ENCODE measurements at regions of chr12 and their contacts with region 1.

Region 1: DNA sequence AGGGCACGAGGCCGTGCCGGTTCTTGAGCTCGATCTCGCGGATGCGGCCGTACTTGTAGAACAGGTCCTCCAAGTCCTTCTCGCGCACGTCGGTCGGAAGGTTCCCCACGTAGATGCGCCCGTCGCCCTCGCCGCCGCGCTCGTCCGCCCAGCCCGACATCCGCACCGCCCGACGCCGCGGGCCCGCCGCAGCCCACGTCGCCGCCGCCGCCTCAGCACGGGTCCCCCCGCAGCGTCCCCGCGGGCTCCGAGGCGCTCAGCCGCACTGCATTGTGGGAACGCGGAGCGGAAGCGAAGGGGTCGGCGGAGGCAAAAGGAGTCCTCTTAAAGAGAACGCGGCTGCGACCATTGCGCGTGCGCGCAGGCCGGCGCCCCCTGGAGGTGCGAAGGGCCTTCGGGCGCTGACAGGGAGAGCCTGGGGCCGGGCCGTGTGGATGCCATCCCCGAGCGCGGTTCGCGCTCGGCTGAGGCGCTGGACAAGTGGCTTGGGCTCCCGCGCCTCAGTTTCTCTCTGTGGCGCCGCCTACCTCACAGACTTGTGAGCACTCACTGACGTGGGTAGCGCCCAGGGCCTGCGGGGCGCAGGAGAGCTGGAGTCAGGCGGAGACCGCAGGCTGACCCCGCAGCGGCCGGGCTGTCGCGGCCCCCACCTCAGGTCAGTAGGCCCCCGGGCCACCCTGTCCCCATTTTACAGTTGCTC is at the start of gene SRSF9:
- DNase-seq: peak; percentile 96 to 99 (median 97)
- H3K4me3 ChIP-seq: peak within 1 kb of the TSS; percentile 86
- H3K4me3 Mint-ChIP-seq: peak within 1 kb of the TSS; percentile 81 to 96 (median 92)
- H3K27ac ChIP-seq: peak within 1 kb of the TSS; percentile 75
- H3K27ac Mint-ChIP-seq: peak within 1 kb of the TSS; percentile 79 to 97 (median 94)
- H3K4me1 ChIP-seq: peaks cover 50% of the 10 kb centered on the region
- H3K4me1 Mint-ChIP-seq: peaks cover 47 to 61% (median 60%) of the 10 kb centered on the region in 3 donors
- H3K27me3 ChIP-seq: no peaks in the 10 kb centered on the region
- H3K27me3 Mint-ChIP-seq: peaks cover 0 to 3% of the 10 kb centered on the region in 2 donors
- total RNA-seq, gene SRSF9: 269 to 272 TPM

Region 2: DNA sequence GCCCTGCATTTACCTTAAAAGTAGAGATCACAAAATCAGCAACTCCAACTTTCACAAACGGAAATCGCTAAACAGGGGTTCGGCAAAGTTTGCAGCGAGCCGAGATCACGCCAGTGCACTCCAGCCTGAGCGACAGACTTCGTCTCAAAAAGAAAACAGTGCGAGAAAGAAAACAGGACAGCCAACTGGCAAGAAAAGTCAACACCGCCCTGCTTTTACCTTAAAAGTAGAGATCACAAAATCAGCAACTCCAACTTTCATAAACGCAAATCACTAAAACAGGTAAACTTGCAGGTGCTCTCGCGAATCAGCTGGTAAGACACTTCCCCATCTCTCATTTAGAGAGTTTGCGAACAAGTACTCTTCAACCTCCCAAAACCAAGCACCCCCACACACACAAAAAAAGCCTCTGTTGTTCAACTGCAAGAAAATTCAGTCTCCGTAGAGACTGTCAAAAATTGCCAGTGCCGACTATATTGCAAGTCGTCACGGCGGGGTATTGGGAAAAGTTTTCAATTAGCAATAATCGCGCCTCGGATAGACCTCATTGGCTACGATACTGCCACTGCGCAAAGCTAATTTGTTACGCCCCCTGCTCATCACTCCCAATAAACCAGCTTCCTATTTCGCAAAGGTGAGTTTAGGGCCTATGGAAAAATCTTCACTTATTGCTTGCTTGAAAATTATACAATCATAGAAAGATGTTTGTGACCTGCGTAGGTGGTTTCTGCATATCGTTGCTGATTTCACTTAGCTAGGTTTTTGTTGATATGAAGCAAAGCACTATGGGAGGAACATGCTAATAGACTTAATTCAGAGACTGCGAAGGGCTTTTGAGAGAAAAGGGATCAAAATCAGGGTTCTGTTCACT is 176.7 kb before region 1 on chr12 and contains the start of gene RNU4-1:
- CTCF ChIA-PET with region 1: no interaction called
- POLR2A ChIA-PET with region 1: interaction called, 20 read pairs
- DNase-seq: peak; percentile 52 to 90 (median 85)
- H3K4me3 ChIP-seq: peak within 1 kb of the TSS; percentile 91
- H3K4me3 Mint-ChIP-seq: no peak within 1 kb of the TSS
- H3K27ac ChIP-seq: peak within 1 kb of the TSS; percentile 100
- H3K27ac Mint-ChIP-seq: no peak within 1 kb of the TSS
- H3K4me1 ChIP-seq: peaks cover 16% of the 10 kb centered on the region
- H3K4me1 Mint-ChIP-seq: peaks cover 4 to 7% (median 5%) of the 10 kb centered on the region in 3 donors
- H3K27me3 ChIP-seq: no peaks in the 10 kb centered on the region
- H3K27me3 Mint-ChIP-seq: no peaks in the 10 kb centered on the region
- total RNA-seq, gene RNU4-1: 628 to 678 TPM

Region 3: DNA sequence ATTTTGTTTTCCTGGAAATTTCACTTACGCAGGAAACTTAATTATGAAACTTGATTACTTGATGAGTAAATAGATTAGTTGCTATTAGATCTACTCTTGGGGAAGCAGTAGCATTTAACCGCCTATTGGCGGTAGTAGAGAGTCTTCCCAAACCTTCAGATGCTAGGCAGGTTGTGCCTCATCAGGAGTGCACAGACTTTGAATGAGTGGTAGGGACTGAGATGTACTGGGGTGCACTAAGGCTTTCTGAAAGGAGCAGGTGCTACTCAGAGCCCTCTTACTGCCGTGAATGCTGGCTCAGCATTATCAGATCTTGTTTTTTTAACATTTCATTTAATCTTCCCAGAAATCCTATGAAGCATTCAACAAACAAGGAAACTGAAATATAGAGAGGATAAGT is 15.6 kb before region 1 on chr12:
- CTCF ChIA-PET with region 1: interaction called, 16 read pairs
- POLR2A ChIA-PET with region 1: interaction called, 3 read pairs
- DNase-seq: peak in 3 of 5 donors; percentile 24 to 52 (median 26)
- H3K4me3 ChIP-seq: no peak overlapping the region
- H3K4me3 Mint-ChIP-seq: no peak overlapping the region
- H3K27ac ChIP-seq: no peak overlapping the region
- H3K27ac Mint-ChIP-seq: peak overlapping the region in 4 of 8 donors; percentile 61 to 75 (median 70)
- H3K4me1 ChIP-seq: no peaks in the 10 kb centered on the region
- H3K4me1 Mint-ChIP-seq: peaks cover 0 to 8% (median 5%) of the 10 kb centered on the region in 3 donors
- H3K27me3 ChIP-seq: no peaks in the 10 kb centered on the region
- H3K27me3 Mint-ChIP-seq: no peaks in the 10 kb centered on the region

Region 4: GRCh38 chr12:120495723-120496412 is 26.3 kb after region 1 on chr12 and contains the start of gene DYNLL1:
- CTCF ChIA-PET with region 1: interaction called, 36 read pairs
- POLR2A ChIA-PET with region 1: interaction called, 36 read pairs
- DNase-seq: peak; percentile 95 to 98 (median 97)
- H3K4me3 ChIP-seq: peak within 1 kb of the TSS; percentile 87
- H3K4me3 Mint-ChIP-seq: peak within 1 kb of the TSS; percentile 91 to 98 (median 94)
- H3K27ac ChIP-seq: peak within 1 kb of the TSS; percentile 78
- H3K27ac Mint-ChIP-seq: peak within 1 kb of the TSS; percentile 77 to 98 (median 92)
- H3K4me1 ChIP-seq: peaks cover 17% of the 10 kb centered on the region
- H3K4me1 Mint-ChIP-seq: peaks cover 30 to 42% (median 38%) of the 10 kb centered on the region in 3 donors
- H3K27me3 ChIP-seq: no peaks in the 10 kb centered on the region
- H3K27me3 Mint-ChIP-seq: no peaks in the 10 kb centered on the region
- total RNA-seq, gene DYNLL1: 288 to 296 TPM

Region 5: GRCh38 chr12:120534203-120534702 is 64.7 kb after region 1 on chr12 and contains the start of gene RNF10:
- CTCF ChIA-PET with region 1: interaction called, 13 read pairs
- POLR2A ChIA-PET with region 1: interaction called, 5 read pairs
- DNase-seq: peak; percentile 59 to 85 (median 83)
- H3K4me3 ChIP-seq: peak within 1 kb of the TSS; percentile 68
- H3K4me3 Mint-ChIP-seq: peak within 1 kb of the TSS; percentile 90 to 98 (median 95)
- H3K27ac ChIP-seq: peak within 1 kb of the TSS; percentile 86
- H3K27ac Mint-ChIP-seq: peak within 1 kb of the TSS; percentile 92 to 99 (median 94)
- H3K4me1 ChIP-seq: peaks cover 48% of the 10 kb centered on the region
- H3K4me1 Mint-ChIP-seq: peaks cover 48 to 61% (median 56%) of the 10 kb centered on the region in 3 donors
- H3K27me3 ChIP-seq: no peaks in the 10 kb centered on the region
- H3K27me3 Mint-ChIP-seq: peaks cover 0 to 2% of the 10 kb centered on the region in 2 donors
- total RNA-seq, gene RNF10: 173 to 205 TPM

Measured in CD8-positive, alpha-beta memory T cell (primary cell).